AG04450 (cell line): ENCODE measurements at regions of chr14 and their contacts with region 1.

Region 1: GRCh38 chr14:61493239-61493638 is 171.9 kb downstream of the PRKCH start:
- DNase-seq: peak; percentile 81
- H3K4me3 ChIP-seq: no peak overlapping the region
- H3K27ac ChIP-seq: peak overlapping the region; percentile 32
- H3K27me3 ChIP-seq: no peaks in the 10 kb centered on the region
- CTCF ChIP-seq: no peak

Region 2: GRCh38 chr14:61308198-61308597 is 185.0 kb before region 1 on chr14:
- CTCF ChIA-PET with region 1: no interaction called
- POLR2A ChIA-PET with region 1: no interaction called
- DNase-seq: no peak
- H3K4me3 ChIP-seq: no peak overlapping the region
- H3K27ac ChIP-seq: no peak overlapping the region
- H3K27me3 ChIP-seq: no peaks in the 10 kb centered on the region
- CTCF ChIP-seq: no peak

Region 3: DNA sequence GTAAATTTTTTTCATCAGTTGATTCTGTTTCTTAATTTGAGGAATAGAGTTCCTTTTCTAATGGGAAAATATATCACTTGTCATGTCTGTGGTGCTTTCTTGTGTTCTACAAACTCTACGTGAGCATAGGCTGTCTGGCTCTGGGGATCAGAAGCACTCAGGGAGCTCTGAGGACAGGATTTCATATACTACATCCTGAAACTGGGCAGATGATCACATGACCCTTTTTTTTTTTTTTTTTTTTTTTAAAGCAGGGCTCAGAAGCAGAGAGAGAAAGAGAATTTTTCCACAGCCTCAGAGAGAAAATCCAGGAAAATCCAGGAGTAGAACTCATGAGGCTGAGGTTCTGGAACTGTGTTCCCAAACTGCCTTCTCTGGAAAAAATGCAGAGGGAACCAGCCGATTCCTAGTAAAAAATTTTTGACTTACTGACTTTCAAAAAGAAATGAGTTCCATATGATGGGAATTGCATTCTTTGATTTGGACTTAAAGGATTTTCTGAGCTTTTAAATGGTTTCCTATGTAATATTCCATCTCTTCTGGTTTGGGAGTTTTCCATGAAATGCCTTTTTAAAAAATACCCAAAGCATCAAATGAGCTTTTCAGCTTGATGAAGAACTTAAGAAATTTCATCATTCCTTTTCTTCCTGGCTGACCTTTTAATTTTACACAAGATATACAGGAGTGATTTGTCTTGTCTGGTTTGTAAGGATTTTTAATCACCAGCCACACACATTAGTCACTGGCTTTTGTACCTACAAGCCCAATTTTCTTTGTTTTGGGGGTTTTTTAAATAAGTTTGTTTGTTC is 19.0 kb after region 1 on chr14:
- CTCF ChIA-PET with region 1: interaction called, 7 read pairs
- POLR2A ChIA-PET with region 1: interaction called, 10 read pairs
- DNase-seq: no peak
- H3K4me3 ChIP-seq: no peak overlapping the region
- H3K27ac ChIP-seq: no peak overlapping the region
- H3K27me3 ChIP-seq: no peaks in the 10 kb centered on the region
- CTCF ChIP-seq: no peak

Region 4: GRCh38 chr14:61553725-61554641 is 60.7 kb after region 1 on chr14:
- CTCF ChIA-PET with region 1: no interaction called
- POLR2A ChIA-PET with region 1: no interaction called
- DNase-seq: peak; percentile 85
- H3K4me3 ChIP-seq: no peak overlapping the region
- H3K27ac ChIP-seq: peak overlapping the region; percentile 78
- H3K27me3 ChIP-seq: no peaks in the 10 kb centered on the region
- CTCF ChIP-seq: no peak